ENCODE measurements at regions of chr5 and their contacts with region 1.

Region 1: GRCh38 chr5:57298295-57298984 is 124.6 kb downstream of the GPBP1 start:
- DNase-seq: peak; percentile 73
- ATAC-seq: peak; percentile 91
- H3K4me3 ChIP-seq: no peak overlapping the region
- H3K27ac ChIP-seq: no peak overlapping the region
- H3K4me1 ChIP-seq: peaks cover 15% of the 10 kb centered on the region; the same call in 1 of the 2 replicates
- H3K27me3 ChIP-seq: no peaks in the 10 kb centered on the region; a peak in 1 of 5 replicates
- CTCF ChIP-seq: peak; percentile 79
- EP300 ChIP-seq: no peak
- POLR2A ChIP-seq: no peak
- RAD21 ChIP-seq: peak; percentile 64; the same call in 1 of the 2 replicates

Region 2: DNA sequence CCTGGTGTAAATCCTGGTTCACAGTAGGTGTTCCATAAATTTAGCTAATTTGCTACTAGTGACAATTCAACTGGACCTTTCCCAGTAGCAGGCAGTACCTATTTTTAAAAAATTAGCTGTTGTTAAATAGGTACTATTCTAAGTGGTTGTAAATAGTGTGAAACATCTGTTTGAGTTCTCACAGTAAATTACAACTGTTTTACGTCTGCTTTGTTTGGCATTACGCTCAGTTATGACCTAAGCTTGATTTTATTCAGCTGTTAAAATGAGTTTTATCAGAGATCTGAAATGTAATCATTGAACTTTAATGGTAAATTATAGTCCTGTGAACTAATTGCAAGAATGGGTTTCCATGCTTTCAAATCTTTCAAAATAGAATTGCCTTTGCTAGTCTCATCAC is 30.6 kb before region 1 on chr5:
- CTCF ChIA-PET with region 1: no interaction called
- POLR2A ChIA-PET with region 1: no interaction called
- in situ Hi-C with region 1: no loop called
- intact Hi-C with region 1: no loop called
- DNase-seq: no peak
- ATAC-seq: no peak
- H3K4me3 ChIP-seq: no peak overlapping the region
- H3K27ac ChIP-seq: no peak overlapping the region
- H3K4me1 ChIP-seq: no peaks in the 10 kb centered on the region
- H3K27me3 ChIP-seq: no peaks in the 10 kb centered on the region
- CTCF ChIP-seq: no peak
- EP300 ChIP-seq: no peak
- POLR2A ChIP-seq: no peak
- RAD21 ChIP-seq: no peak

Region 3: DNA sequence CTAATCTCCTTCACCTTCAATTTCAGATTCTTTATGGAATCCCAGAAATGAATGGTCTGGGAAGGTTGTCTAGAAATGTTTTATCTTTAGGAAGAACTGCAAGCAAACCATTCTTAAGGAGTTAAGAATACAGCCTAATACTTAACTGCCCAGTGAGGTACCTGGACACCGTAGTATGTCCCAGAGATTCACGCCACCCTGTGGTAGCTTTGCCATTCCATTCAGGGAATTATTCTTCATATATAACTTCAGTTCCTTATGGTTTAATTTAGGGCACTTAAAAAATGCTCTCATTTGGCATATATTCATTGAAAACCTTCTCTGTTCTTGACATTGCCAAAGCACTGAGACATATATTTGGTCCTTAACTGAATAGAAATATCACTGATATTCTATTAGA is 134.4 kb after region 1 on chr5:
- CTCF ChIA-PET with region 1: interaction called, 63 read pairs
- POLR2A ChIA-PET with region 1: no interaction called
- in situ Hi-C with region 1: loop called (anchors 5 kb)
- intact Hi-C with region 1: loop called (anchors 1 kb)
- DNase-seq: peak; percentile 28
- ATAC-seq: peak; percentile 72
- H3K4me3 ChIP-seq: no peak overlapping the region
- H3K27ac ChIP-seq: no peak overlapping the region
- H3K4me1 ChIP-seq: no peaks in the 10 kb centered on the region
- H3K27me3 ChIP-seq: no peaks in the 10 kb centered on the region
- CTCF ChIP-seq: peak; percentile 44
- EP300 ChIP-seq: no peak
- POLR2A ChIP-seq: no peak
- RAD21 ChIP-seq: no peak

Region 4: DNA sequence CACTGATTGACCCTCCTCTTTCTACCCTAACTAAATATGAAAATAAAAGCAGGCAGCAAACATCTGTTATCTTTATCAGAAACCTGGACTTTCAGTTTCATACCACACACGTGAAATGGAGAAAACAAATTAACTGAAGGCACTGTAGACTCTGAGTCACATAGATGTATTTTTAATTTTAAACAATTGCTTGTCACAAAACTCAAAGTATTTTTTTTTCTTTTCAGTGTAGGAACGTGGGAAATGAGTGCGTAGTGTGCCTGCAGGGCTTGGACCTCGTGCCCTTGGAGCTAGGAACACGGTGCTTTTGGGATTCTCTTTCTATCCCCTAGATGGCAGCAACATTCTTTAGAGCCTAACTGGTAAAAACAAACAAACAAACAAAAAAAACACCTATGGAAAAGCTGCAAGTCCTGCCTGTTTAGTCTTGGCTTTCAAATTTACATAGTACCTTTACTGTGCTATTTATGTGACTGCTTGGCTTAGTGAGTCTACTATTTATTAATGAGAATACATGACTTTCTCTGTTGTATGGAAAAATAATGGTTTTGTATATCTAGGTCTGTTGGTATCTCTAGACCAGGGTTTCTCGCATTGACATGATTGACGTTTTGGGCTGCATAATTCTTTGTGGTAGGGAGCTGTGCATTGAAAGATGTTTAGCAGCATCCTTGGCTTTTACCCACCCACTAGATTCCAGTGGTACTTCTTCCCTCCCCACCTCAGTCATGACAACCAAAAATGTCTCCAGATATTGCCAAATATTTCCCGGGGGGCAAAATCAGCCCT is 201.0 kb after region 1 on chr5:
- CTCF ChIA-PET with region 1: interaction called, 4 read pairs
- POLR2A ChIA-PET with region 1: no interaction called
- in situ Hi-C with region 1: no loop called
- intact Hi-C with region 1: loop called (anchors 5 kb)
- DNase-seq: peak; percentile 5
- ATAC-seq: peak; percentile 72
- H3K4me3 ChIP-seq: no peak overlapping the region
- H3K27ac ChIP-seq: no peak overlapping the region
- H3K4me1 ChIP-seq: no peaks in the 10 kb centered on the region
- H3K27me3 ChIP-seq: peaks cover 0 to 8% of the 10 kb centered on the region in 2 experiments; a peak in 2 of 5 replicates
- CTCF ChIP-seq: peak; percentile 66
- EP300 ChIP-seq: no peak
- POLR2A ChIP-seq: no peak
- RAD21 ChIP-seq: no peak; the same call in 1 of the 2 replicates

Region 5: GRCh38 chr5:57779383-57780223 is 481.2 kb after region 1 on chr5:
- CTCF ChIA-PET with region 1: no interaction called
- POLR2A ChIA-PET with region 1: no interaction called
- in situ Hi-C with region 1: no loop called
- intact Hi-C with region 1: loop called (anchors 5 kb)
- DNase-seq: peak; percentile 49
- ATAC-seq: peak; percentile 83
- H3K4me3 ChIP-seq: no peak overlapping the region
- H3K27ac ChIP-seq: no peak overlapping the region
- H3K4me1 ChIP-seq: peaks cover 31% of the 10 kb centered on the region
- H3K27me3 ChIP-seq: no peaks in the 10 kb centered on the region
- CTCF ChIP-seq: peak; percentile 66
- EP300 ChIP-seq: no peak
- POLR2A ChIP-seq: no peak
- RAD21 ChIP-seq: peak; percentile 38; the same call in 1 of the 2 replicates